ENCODE measurements at regions of chr14 and their contacts with region 1.

Region 1: GRCh38 chr14:85788470-85789233 is 258.7 kb downstream of the FLRT2 start:
- DNase-seq: no peak
- H3K4me3 ChIP-seq: no peak overlapping the region
- H3K27ac ChIP-seq: no peak overlapping the region
- H3K4me1 ChIP-seq: no peaks in the 10 kb centered on the region
- H3K27me3 ChIP-seq: no peaks in the 10 kb centered on the region
- CTCF ChIP-seq: no peak

Region 2: GRCh38 chr14:84622357-84622756 is 1166.3 kb before region 1 on chr14:
- intact Hi-C with region 1: loop called (anchors 5 kb)
- DNase-seq: no peak
- H3K4me3 ChIP-seq: no peak overlapping the region
- H3K27ac ChIP-seq: no peak overlapping the region
- H3K4me1 ChIP-seq: no peaks in the 10 kb centered on the region
- H3K27me3 ChIP-seq: no peaks in the 10 kb centered on the region
- CTCF ChIP-seq: no peak

Region 3: DNA sequence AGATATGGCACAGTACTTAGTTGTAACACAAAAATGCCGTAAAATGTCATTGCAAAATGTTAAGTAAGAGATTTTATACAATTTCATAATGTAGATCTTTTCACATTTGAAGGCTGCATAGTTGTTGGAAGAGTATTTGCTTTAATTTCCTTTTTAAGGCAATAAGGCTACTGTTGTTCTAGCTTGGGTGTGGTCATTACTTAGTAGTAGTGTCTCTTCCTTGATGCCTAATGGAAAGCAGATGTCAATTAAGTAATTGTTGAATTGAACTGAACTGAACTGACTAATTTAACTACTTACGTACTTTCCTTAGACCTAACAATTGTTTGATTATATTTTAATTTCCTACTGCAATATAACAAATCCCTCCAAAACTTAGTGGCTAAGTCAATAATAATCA is 77.0 kb before region 1 on chr14:
- intact Hi-C with region 1: no loop called
- DNase-seq: no peak
- H3K4me3 ChIP-seq: no peak overlapping the region
- H3K27ac ChIP-seq: no peak overlapping the region
- H3K4me1 ChIP-seq: no peaks in the 10 kb centered on the region
- H3K27me3 ChIP-seq: no peaks in the 10 kb centered on the region
- CTCF ChIP-seq: no peak

Measured in tibial artery (tissue), 4 donors.